GM18951 (cell line): ENCODE measurements at regions of chrX and their contacts with region 1.

Region 1: DNA sequence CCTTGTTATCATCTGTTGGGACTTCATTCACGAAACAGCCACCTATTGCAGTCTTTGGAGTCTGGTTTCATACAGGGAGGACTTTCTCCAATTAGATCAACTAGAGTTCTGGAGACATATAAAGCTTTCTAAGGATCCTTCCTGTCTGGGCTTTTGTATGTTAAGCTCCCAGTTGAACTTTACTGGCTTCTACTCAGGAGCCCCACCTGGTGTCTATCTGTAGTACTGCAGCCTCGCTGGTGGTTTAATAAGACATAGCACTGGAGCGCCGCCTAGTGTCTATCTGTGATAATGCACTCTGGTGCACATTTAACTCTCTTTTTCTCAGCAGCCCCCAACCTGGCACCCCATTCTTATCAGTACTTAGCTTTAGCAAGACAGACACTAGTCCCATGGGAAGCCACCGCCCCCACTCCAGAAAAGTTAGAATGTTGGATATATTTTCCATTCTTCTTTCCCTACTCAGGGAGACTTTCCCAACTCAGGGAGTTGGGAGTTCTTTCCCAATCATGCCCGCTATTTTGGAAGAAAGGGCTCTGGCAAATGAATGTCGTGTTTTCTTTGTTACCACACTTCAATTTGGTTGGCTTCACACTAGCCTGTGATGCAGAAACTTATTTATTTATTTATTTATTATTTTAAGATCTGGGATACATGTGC is 36.9 kb upstream of the SYTL4 start:
- POLR2A ChIP-seq: no peak

Region 2: DNA sequence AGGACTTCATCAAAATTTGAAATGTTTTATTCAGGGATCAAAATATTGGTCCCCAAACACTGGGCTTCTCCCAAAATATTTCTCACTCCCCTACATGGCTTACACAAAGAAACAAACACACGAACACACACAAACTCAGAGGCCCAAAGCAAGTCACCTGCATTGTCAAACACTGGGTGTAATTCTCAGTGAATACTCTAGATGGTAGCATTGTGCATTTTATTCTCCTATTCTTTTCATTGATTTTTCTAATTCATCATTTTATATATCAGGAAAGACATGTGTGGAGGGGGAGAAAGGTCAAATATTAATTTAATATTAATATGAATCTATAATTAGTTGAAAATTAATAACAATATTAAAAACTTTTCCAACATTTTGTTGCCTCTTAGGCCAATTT is 256.3 kb before region 1 on chrX:
- in situ Hi-C with region 1: loop called (anchors 25 kb)
- POLR2A ChIP-seq: no peak

Region 3: GRCh38 chrX:100685284-100685996 is 83.4 kb before region 1 on chrX:
- in situ Hi-C with region 1: loop called (anchors 5 kb)
- POLR2A ChIP-seq: no peak